Activated CD4-positive, alpha-beta memory T cell treated with anti-CD3 and anti-CD28 coated beads for 36 hours (primary cell): ENCODE measurements at regions of chr11 and their contacts with region 1.

Region 1: GRCh38 chr11:109946322-109946846 is 146.8 kb upstream of the ZC3H12C start:
- DNase-seq: peak; percentile 70
- H3K4me3 Mint-ChIP-seq: no peak overlapping the region
- H3K27ac Mint-ChIP-seq: no peak overlapping the region
- H3K4me1 Mint-ChIP-seq: peaks cover 2% of the 10 kb centered on the region
- H3K27me3 Mint-ChIP-seq: no peaks in the 10 kb centered on the region

Region 2: GRCh38 chr11:110092515-110093404 is 146.4 kb after region 1 on chr11 and contains the start of gene ZC3H12C:
- CTCF ChIA-PET with region 1: no interaction called
- POLR2A ChIA-PET with region 1: no interaction called
- intact Hi-C with region 1: loop called (anchors 5 kb)
- DNase-seq: peak; percentile 63
- H3K4me3 Mint-ChIP-seq: peak within 1 kb of the TSS; percentile 74
- H3K27ac Mint-ChIP-seq: no peak within 1 kb of the TSS
- H3K4me1 Mint-ChIP-seq: peaks cover 9% of the 10 kb centered on the region
- H3K27me3 Mint-ChIP-seq: peaks cover 43% of the 10 kb centered on the region
- total RNA-seq, gene ZC3H12C: 0.46 to 0.69 TPM

Region 3: GRCh38 chr11:110173811-110174644 is 227.6 kb after region 1 on chr11:
- CTCF ChIA-PET with region 1: no interaction called
- POLR2A ChIA-PET with region 1: no interaction called
- intact Hi-C with region 1: loop called (anchors 5 kb)
- DNase-seq: peak; percentile 76
- H3K4me3 Mint-ChIP-seq: no peak overlapping the region
- H3K27ac Mint-ChIP-seq: no peak overlapping the region
- H3K4me1 Mint-ChIP-seq: peaks cover 5% of the 10 kb centered on the region
- H3K27me3 Mint-ChIP-seq: peaks cover 12% of the 10 kb centered on the region